Adrenal gland (tissue), 19 donors: ENCODE measurements at regions of chr9 and their contacts with region 1.

Region 1: GRCh38 chr9:17531642-17532254 is 47.1 kb upstream of the SH3GL2 start:
- DNase-seq: peak; percentile 19 to 59 (median 33)
- H3K4me3 ChIP-seq: no peak overlapping the region
- H3K27ac ChIP-seq: no peak overlapping the region
- H3K4me1 ChIP-seq: no peaks in the 10 kb centered on the region
- H3K27me3 ChIP-seq: no peaks in the 10 kb centered on the region
- CTCF ChIP-seq: peak; percentile 50 to 69 (median 56)
- POLR2A ChIP-seq: no peak

Region 2: DNA sequence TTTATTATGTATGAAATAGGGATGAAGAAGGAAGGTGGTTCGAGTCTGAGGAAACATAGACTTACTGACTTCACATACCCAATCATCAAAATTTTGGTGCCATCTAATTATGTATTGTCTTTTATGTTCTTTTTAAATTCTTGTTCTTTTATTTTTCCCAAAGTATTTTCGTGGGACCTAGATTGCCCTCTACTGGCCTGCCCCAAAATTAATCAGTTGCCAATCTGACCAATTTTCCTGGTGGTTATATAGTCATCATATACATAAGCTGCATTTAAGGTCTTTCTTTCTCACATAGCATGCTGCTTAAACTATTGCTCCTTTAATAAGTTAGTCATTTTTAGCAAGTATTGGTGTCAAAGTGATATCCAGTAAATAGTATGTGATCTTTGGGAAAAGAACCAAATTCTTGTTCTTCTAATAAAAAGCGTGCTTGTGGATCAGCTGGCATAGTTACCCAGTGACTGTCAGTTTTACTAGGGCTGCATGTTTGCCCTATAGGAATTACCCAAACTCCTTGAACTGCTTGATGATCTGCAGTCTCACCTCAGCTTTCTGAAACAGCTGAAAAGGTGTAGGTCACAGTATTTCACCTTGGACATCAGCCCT is 270.6 kb after region 1 on chr9:
- intact Hi-C with region 1: loop called (anchors 5 to 10 kb)
- DNase-seq: no peak
- H3K4me3 ChIP-seq: no peak overlapping the region
- H3K27ac ChIP-seq: no peak overlapping the region
- H3K4me1 ChIP-seq: no peaks in the 10 kb centered on the region
- H3K27me3 ChIP-seq: no peaks in the 10 kb centered on the region
- CTCF ChIP-seq: peak; percentile 40 to 56 (median 48)
- POLR2A ChIP-seq: no peak

Region 3: DNA sequence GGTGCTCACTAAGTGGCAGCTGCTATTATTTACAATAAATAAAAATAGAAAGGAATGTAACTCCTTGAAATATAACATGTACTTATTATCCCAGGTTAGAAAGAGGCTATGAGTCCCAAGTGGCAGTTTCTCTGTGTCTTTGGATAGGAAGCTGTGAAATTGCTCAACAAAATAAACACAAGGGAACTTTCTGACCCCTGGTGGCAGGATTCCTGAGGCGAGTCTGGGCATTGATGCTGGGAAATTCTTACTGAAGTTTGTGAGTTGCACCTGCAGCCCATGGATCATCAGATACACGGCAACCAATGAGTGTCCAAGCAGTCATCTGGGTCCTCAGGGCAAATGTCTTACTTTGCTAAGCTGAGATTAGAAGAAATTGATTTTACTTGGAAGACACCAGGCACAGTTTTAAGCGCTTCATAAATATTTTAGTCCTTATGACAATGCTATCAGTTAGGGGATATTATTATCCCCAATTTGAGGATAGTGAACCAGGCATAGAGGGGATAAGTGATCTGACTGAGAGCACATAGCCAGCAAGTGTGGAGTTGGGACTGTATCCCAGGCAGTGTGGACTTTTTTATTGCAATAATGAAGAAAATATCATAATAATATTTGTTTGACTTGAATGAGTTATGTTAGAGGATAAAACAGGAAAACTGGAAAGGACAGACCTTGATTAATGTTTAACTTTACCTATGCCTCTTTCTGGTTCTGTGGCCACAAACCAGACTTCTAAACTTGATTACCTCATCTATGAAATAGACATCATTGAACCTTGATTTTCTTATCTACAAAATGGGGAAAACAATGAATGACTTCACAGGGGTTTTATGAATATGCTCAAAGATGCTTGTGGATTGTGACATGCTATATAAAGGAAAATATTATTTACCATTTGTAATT is 676.7 kb after region 1 on chr9:
- intact Hi-C with region 1: loop called in 1 of 2 experiments (anchors 10 kb)
- DNase-seq: peak; percentile 17 to 67 (median 34)
- H3K4me3 ChIP-seq: no peak overlapping the region
- H3K27ac ChIP-seq: no peak overlapping the region
- H3K4me1 ChIP-seq: no peaks in the 10 kb centered on the region
- H3K27me3 ChIP-seq: no peaks in the 10 kb centered on the region
- CTCF ChIP-seq: peak; percentile 11 to 53 (median 40)
- POLR2A ChIP-seq: no peak